CD4-positive, alpha-beta T cell (primary cell): ENCODE measurements at regions of chr1 and their contacts with region 1.

Region 1: GRCh38 chr1:1013105-1013921 is at the start of gene ISG15:
- DNase-seq: peak; percentile 81 to 95 (median 86)
- ATAC-seq: peak; percentile 96
- H3K4me3 ChIP-seq: peak within 1 kb of the TSS; percentile 87
- H3K4me3 Mint-ChIP-seq: peak within 1 kb of the TSS; percentile 94
- H3K27ac ChIP-seq: peak within 1 kb of the TSS; percentile 89 to 90
- H3K27ac Mint-ChIP-seq: peak within 1 kb of the TSS; percentile 88
- H3K4me1 ChIP-seq: peaks cover 25% of the 10 kb centered on the region
- H3K4me1 Mint-ChIP-seq: peaks cover 31% of the 10 kb centered on the region
- H3K27me3 ChIP-seq: no peaks in the 10 kb centered on the region
- H3K27me3 Mint-ChIP-seq: peaks cover 5% of the 10 kb centered on the region
- CTCF ChIP-seq: no peak
- total RNA-seq, gene ISG15: 38.0 to 38.9 TPM

Region 2: DNA sequence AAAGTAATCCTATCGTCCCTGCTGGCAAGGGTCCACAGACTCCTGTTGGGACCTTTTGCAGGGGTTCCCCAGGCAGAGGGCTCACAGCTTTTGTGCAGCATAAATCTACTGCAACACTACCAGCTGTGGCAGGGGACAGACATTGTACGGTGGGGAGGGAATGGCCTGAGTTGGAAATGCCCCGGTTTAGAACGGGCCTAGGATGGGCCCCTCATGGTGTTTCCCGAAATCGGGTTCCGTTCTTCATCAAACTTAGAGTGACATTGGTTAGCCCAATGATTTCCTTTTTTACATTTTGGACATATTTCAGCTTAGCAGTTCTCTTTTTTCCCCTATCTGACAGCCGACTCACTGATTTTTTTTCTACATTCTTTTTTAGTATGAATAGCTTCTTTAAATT is 116.1 kb before region 1 on chr1:
- CTCF ChIA-PET with region 1: no interaction called
- POLR2A ChIA-PET with region 1: no interaction called
- intact Hi-C with region 1: no loop called
- DNase-seq: no peak
- ATAC-seq: no peak
- H3K4me3 ChIP-seq: no peak overlapping the region
- H3K4me3 Mint-ChIP-seq: no peak overlapping the region
- H3K27ac ChIP-seq: no peak overlapping the region
- H3K27ac Mint-ChIP-seq: no peak overlapping the region
- H3K4me1 ChIP-seq: peaks cover 14% of the 10 kb centered on the region
- H3K4me1 Mint-ChIP-seq: peaks cover 12% of the 10 kb centered on the region
- H3K27me3 ChIP-seq: peaks cover 10 to 16% of the 10 kb centered on the region in 2 experiments
- H3K27me3 Mint-ChIP-seq: peaks cover 36% of the 10 kb centered on the region
- CTCF ChIP-seq: no peak

Region 3: GRCh38 chr1:1001461-1002204 is 11.7 kb before region 1 on chr1:
- CTCF ChIA-PET with region 1: interaction called, 13 read pairs
- POLR2A ChIA-PET with region 1: interaction called, 11 read pairs
- intact Hi-C with region 1: no loop called
- DNase-seq: peak in 13 of 14 experiments; percentile 44 to 80 (median 62)
- ATAC-seq: no peak
- H3K4me3 ChIP-seq: peak overlapping the region; percentile 37
- H3K4me3 Mint-ChIP-seq: peak overlapping the region; percentile 87
- H3K27ac ChIP-seq: no peak overlapping the region
- H3K27ac Mint-ChIP-seq: peak overlapping the region; percentile 94
- H3K4me1 ChIP-seq: peaks cover 49% of the 10 kb centered on the region
- H3K4me1 Mint-ChIP-seq: peaks cover 17% of the 10 kb centered on the region
- H3K27me3 ChIP-seq: peaks cover 65 to 78% of the 10 kb centered on the region in 2 experiments
- H3K27me3 Mint-ChIP-seq: peaks cover 57% of the 10 kb centered on the region
- CTCF ChIP-seq: peak; percentile 92

Region 4: GRCh38 chr1:1053022-1053421 is 39.7 kb after region 1 on chr1:
- CTCF ChIA-PET with region 1: no interaction called
- POLR2A ChIA-PET with region 1: no interaction called
- intact Hi-C with region 1: no loop called
- DNase-seq: no peak
- ATAC-seq: no peak
- H3K4me3 ChIP-seq: no peak overlapping the region
- H3K4me3 Mint-ChIP-seq: no peak overlapping the region
- H3K27ac ChIP-seq: no peak overlapping the region
- H3K27ac Mint-ChIP-seq: no peak overlapping the region
- H3K4me1 ChIP-seq: no peaks in the 10 kb centered on the region
- H3K4me1 Mint-ChIP-seq: no peaks in the 10 kb centered on the region
- H3K27me3 ChIP-seq: peaks cover 0 to 2% of the 10 kb centered on the region in 2 experiments
- H3K27me3 Mint-ChIP-seq: peaks cover 13% of the 10 kb centered on the region
- CTCF ChIP-seq: no peak